Calu3 (cell line): ENCODE measurements at regions of chr10 and their contacts with region 1.

Region 1: GRCh38 chr10:77710759-77711682 is 73.4 kb upstream of the KCNMA1 start:
- DNase-seq: peak; percentile 93
- H3K4me3 Mint-ChIP-seq: peak overlapping the region; percentile 42
- H3K27ac Mint-ChIP-seq: no peak overlapping the region
- H3K4me1 Mint-ChIP-seq: no peaks in the 10 kb centered on the region
- H3K27me3 Mint-ChIP-seq: no peaks in the 10 kb centered on the region
- CTCF ChIP-seq: peak; percentile 98

Region 2: DNA sequence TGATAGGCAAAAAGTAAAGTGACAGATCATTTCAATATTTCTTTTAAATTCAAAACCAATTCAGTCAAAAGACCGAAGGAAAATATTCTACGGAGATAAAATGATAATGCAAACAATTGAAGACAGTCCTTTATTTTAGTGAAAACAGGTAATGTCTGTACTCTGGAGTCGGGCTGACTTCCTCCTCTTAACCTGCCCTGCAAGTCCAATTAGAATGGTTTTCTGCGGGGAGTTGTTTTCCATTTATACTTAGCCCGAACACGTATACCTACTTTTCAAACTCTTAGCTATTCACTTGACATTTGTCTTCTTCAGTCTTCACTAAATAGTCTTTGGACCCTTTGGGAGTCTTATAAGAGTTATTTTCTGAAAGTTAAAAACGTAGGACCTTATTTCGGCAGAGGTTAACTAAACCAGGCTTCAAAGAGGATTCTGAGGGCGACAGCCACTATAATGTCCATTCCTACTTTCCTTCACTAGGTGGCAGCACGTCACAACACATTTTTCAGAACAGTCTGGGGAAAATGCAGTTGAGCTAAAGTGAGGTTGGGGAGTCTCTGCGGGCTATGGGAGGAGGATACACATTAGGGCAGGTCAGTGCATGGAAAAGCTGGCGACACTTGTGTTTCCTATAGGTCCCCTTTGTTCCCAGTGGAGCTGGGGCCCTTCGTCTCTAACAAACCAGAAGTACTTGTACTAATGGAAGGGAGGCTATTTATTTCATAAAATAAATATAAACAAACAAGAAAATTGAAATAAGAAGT is 545.4 kb before region 1 on chr10:
- CTCF ChIA-PET with region 1: interaction called, 38 read pairs
- intact Hi-C with region 1: loop called (anchors 2 kb)
- DNase-seq: peak; percentile 72
- H3K4me3 Mint-ChIP-seq: peak overlapping the region; percentile 66
- H3K27ac Mint-ChIP-seq: peak overlapping the region; percentile 70
- H3K4me1 Mint-ChIP-seq: peaks cover 33% of the 10 kb centered on the region
- H3K27me3 Mint-ChIP-seq: peaks cover 7% of the 10 kb centered on the region
- CTCF ChIP-seq: peak; percentile 89

Region 3: GRCh38 chr10:77173615-77174461 is 537.2 kb before region 1 on chr10:
- CTCF ChIA-PET with region 1: interaction called, 16 read pairs
- intact Hi-C with region 1: no loop called
- DNase-seq: peak; percentile 83
- H3K4me3 Mint-ChIP-seq: no peak overlapping the region
- H3K27ac Mint-ChIP-seq: no peak overlapping the region
- H3K4me1 Mint-ChIP-seq: peaks cover 5% of the 10 kb centered on the region
- H3K27me3 Mint-ChIP-seq: no peaks in the 10 kb centered on the region
- CTCF ChIP-seq: peak; percentile 82

Region 4: GRCh38 chr10:77391605-77392235 is 319.3 kb before region 1 on chr10:
- CTCF ChIA-PET with region 1: interaction called, 5 read pairs
- intact Hi-C with region 1: loop called (anchors 10 kb)
- DNase-seq: peak; percentile 86
- H3K4me3 Mint-ChIP-seq: no peak overlapping the region
- H3K27ac Mint-ChIP-seq: no peak overlapping the region
- H3K4me1 Mint-ChIP-seq: peaks cover 9% of the 10 kb centered on the region
- H3K27me3 Mint-ChIP-seq: peaks cover 56% of the 10 kb centered on the region
- CTCF ChIP-seq: peak; percentile 35

Region 5: DNA sequence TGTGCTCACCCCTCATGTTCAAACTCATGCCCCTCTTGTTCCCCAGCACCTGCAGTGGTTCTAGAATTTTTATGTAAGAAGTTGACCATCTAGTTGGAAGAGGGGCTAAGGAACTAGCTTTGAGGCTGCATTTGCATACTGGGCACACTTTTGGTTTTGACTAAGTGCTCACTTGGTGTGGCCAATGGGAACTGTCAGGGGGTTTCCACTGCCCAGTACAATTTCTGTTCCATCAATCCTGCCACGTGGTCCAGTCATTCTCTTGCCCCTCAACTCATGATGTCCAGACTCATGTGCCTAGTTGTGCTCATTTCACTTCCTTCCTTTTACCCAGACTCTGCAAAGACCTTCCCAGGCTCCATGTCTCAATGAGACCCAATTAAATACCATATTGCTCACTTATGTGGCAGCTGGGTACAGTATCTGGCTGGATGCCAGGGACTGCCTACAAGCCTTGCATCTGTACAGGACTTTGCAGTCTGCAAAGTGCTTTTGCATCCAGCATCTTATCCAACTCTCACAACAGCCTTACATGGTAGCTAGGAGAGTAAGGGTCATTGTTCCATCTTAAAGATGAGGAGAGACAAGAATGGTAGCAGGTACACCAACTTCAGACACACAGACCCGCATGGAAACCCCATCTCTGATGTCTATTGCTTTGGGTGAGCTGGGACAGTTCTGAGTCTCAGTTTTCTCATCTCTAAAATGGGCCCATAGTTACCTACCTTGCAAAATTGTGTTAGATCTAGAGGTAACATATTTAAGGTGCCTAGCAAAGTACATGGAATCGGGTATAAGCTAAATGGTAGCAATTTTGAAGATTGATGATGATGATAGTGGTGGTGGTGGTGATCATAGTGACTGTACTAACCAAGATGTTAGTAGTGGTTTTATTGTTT is 43.3 kb before region 1 on chr10:
- CTCF ChIA-PET with region 1: no interaction called
- intact Hi-C with region 1: no loop called
- DNase-seq: no peak
- H3K4me3 Mint-ChIP-seq: no peak overlapping the region
- H3K27ac Mint-ChIP-seq: no peak overlapping the region
- H3K4me1 Mint-ChIP-seq: peaks cover 19% of the 10 kb centered on the region
- H3K27me3 Mint-ChIP-seq: peaks cover 25% of the 10 kb centered on the region
- CTCF ChIP-seq: no peak

Region 6: DNA sequence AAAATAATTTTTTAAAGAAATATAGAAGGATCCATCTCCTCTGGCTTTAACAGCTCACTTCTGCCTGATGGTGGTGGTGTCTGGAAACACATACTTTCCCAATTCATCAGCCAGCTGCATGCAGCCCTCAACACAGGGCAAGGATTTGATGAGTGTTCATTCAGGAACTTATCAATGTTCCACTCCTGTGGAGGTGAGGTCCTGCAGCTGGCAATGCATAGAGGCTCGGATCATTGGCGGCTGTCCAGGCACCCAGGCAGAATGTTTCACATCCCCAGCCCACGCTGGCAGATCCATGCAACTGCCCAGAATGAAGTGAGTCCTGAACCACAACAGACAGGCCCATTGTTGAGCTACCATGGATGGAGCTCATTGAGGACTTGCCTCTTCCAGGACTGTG is 18.2 kb before region 1 on chr10:
- CTCF ChIA-PET with region 1: interaction called, 10 read pairs
- intact Hi-C with region 1: no loop called
- DNase-seq: no peak
- H3K4me3 Mint-ChIP-seq: no peak overlapping the region
- H3K27ac Mint-ChIP-seq: no peak overlapping the region
- H3K4me1 Mint-ChIP-seq: peaks cover 8% of the 10 kb centered on the region
- H3K27me3 Mint-ChIP-seq: no peaks in the 10 kb centered on the region
- CTCF ChIP-seq: no peak

Region 7: DNA sequence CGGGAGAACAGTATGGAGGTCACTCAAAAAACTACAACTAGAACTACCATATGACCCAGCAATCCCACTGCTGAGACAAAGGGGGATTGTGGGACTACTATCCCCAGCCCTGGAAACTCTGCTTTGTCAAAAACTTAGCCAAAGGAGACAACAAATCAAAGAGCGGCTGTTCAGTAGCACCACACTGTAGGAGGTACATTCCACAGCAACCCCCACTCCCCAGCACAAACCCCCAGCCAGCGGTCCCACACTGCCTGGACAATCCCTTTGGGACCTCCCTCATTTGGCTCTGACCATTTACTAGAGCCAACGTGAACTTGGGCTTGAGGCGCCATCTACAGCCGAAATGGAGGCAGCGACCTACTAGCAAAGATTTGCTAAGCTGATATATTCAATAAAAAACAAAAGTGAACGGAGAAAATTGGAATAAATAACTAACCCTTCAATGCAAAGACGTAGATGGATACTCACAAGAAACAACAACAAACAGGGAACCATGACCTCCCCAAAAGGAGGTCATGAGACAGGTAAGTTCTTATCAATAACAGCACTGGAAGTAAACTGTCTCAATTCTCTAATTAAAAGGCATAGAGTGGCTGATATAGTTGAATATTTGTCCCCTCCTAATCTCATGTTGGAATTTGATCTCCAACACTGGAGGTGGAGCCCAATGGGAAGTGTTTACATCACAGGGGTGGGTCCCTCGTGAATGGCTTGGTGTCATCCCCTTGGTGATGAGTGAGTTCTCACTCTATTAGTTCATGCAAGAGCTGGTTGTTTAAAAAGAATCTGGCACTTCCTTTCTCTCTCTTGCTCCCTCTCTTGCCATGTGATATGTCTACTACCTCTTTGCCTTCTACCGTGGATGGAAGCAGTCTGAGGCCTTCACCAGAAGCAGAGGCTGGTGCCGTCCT is 45.6 kb after region 1 on chr10:
- CTCF ChIA-PET with region 1: interaction called, 19 read pairs
- intact Hi-C with region 1: loop called (anchors 1 kb)
- DNase-seq: peak; percentile 64
- H3K4me3 Mint-ChIP-seq: no peak overlapping the region
- H3K27ac Mint-ChIP-seq: no peak overlapping the region
- H3K4me1 Mint-ChIP-seq: peaks cover 11% of the 10 kb centered on the region
- H3K27me3 Mint-ChIP-seq: no peaks in the 10 kb centered on the region
- CTCF ChIP-seq: peak; percentile 86

Region 8: GRCh38 chr10:77970869-77971803 is 260.1 kb after region 1 on chr10:
- CTCF ChIA-PET with region 1: no interaction called
- intact Hi-C with region 1: loop called (anchors 10 kb)
- DNase-seq: no peak
- H3K4me3 Mint-ChIP-seq: no peak overlapping the region
- H3K27ac Mint-ChIP-seq: no peak overlapping the region
- H3K4me1 Mint-ChIP-seq: no peaks in the 10 kb centered on the region
- H3K27me3 Mint-ChIP-seq: no peaks in the 10 kb centered on the region
- CTCF ChIP-seq: no peak